H1 (cell line): ENCODE measurements at regions of chr9 and their contacts with region 1.

Region 1: GRCh38 chr9:83334320-83334719 is 203.9 kb downstream of the FRMD3 start:
- DNase-seq: peak in 1 of 2 experiments; percentile 88
- H3K4me3 ChIP-seq: no peak overlapping the region
- H3K27ac ChIP-seq: no peak overlapping the region
- H3K4me1 ChIP-seq: no peaks in the 10 kb centered on the region
- H3K27me3 ChIP-seq: no peaks in the 10 kb centered on the region
- CTCF ChIP-seq: peak; percentile 66 to 94 (median 88)
- EP300 ChIP-seq: no peak
- POLR2A ChIP-seq: no peak
- RAD21 ChIP-seq: peak; percentile 94 to 95

Region 2: GRCh38 chr9:83219152-83219923 is 115.0 kb before region 1 on chr9:
- CTCF ChIA-PET with region 1: interaction called, 64 read pairs
- POLR2A ChIA-PET with region 1: no interaction called
- DNase-seq: peak; percentile 79 to 93
- H3K4me3 ChIP-seq: peak overlapping the region; percentile 47 to 76 (median 66)
- H3K27ac ChIP-seq: no peak overlapping the region
- H3K4me1 ChIP-seq: peaks cover 0 to 3% (median 0%) of the 10 kb centered on the region in 4 experiments; a peak in 2 of 7 replicates
- H3K27me3 ChIP-seq: no peaks in the 10 kb centered on the region
- CTCF ChIP-seq: peak; percentile 65 to 86 (median 78)
- EP300 ChIP-seq: no peak
- POLR2A ChIP-seq: no peak
- RAD21 ChIP-seq: peak; percentile 94 to 97

Region 3: DNA sequence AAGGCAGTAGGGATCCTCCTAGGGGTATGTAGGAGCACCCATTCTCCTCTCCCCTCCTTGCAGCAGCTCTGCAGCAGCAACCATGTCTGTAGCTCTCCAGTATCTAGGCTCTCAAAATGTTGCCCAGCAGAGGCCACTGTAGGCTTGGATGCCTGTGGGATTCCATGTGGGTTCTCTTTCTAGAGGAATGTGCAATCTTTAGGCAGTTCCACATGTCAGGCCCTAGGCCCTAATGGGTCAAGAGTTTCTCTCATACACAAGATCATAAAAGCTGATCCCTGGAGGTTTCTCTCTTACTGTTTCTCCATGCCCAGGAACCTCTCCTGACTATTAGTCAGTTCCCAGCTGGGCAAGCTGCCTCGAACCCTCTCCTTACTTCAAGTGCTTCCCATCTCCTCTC is 11.9 kb before region 1 on chr9:
- CTCF ChIA-PET with region 1: interaction called, 15 read pairs
- POLR2A ChIA-PET with region 1: no interaction called
- DNase-seq: no peak
- H3K4me3 ChIP-seq: no peak overlapping the region
- H3K27ac ChIP-seq: no peak overlapping the region
- H3K4me1 ChIP-seq: no peaks in the 10 kb centered on the region
- H3K27me3 ChIP-seq: no peaks in the 10 kb centered on the region
- CTCF ChIP-seq: no peak
- EP300 ChIP-seq: no peak
- POLR2A ChIP-seq: no peak
- RAD21 ChIP-seq: peak; percentile 7 to 31; a peak in 2 of 4 replicates

Region 4: GRCh38 chr9:83362341-83362995 is 28.1 kb after region 1 on chr9:
- CTCF ChIA-PET with region 1: interaction called, 11 read pairs
- POLR2A ChIA-PET with region 1: no interaction called
- DNase-seq: no peak
- H3K4me3 ChIP-seq: no peak overlapping the region
- H3K27ac ChIP-seq: no peak overlapping the region
- H3K4me1 ChIP-seq: no peaks in the 10 kb centered on the region; a peak in 1 of 7 replicates
- H3K27me3 ChIP-seq: no peaks in the 10 kb centered on the region
- CTCF ChIP-seq: no peak
- EP300 ChIP-seq: no peak
- POLR2A ChIP-seq: no peak
- RAD21 ChIP-seq: no peak

Region 5: GRCh38 chr9:83526901-83527300 is 192.6 kb after region 1 on chr9:
- CTCF ChIA-PET with region 1: interaction called, 26 read pairs
- POLR2A ChIA-PET with region 1: no interaction called
- DNase-seq: no peak
- H3K4me3 ChIP-seq: no peak overlapping the region
- H3K27ac ChIP-seq: no peak overlapping the region
- H3K4me1 ChIP-seq: peaks cover 0 to 4% (median 0%) of the 10 kb centered on the region in 4 experiments; a peak in 1 of 7 replicates
- H3K27me3 ChIP-seq: no peaks in the 10 kb centered on the region
- CTCF ChIP-seq: no peak
- EP300 ChIP-seq: no peak
- POLR2A ChIP-seq: no peak
- RAD21 ChIP-seq: no peak

Region 6: GRCh38 chr9:83563360-83563759 is 229.0 kb after region 1 on chr9:
- CTCF ChIA-PET with region 1: interaction called, 11 read pairs
- POLR2A ChIA-PET with region 1: no interaction called
- DNase-seq: no peak
- H3K4me3 ChIP-seq: no peak overlapping the region
- H3K27ac ChIP-seq: no peak overlapping the region
- H3K4me1 ChIP-seq: no peaks in the 10 kb centered on the region
- H3K27me3 ChIP-seq: no peaks in the 10 kb centered on the region
- CTCF ChIP-seq: no peak
- EP300 ChIP-seq: no peak
- POLR2A ChIP-seq: no peak
- RAD21 ChIP-seq: no peak

Region 7: DNA sequence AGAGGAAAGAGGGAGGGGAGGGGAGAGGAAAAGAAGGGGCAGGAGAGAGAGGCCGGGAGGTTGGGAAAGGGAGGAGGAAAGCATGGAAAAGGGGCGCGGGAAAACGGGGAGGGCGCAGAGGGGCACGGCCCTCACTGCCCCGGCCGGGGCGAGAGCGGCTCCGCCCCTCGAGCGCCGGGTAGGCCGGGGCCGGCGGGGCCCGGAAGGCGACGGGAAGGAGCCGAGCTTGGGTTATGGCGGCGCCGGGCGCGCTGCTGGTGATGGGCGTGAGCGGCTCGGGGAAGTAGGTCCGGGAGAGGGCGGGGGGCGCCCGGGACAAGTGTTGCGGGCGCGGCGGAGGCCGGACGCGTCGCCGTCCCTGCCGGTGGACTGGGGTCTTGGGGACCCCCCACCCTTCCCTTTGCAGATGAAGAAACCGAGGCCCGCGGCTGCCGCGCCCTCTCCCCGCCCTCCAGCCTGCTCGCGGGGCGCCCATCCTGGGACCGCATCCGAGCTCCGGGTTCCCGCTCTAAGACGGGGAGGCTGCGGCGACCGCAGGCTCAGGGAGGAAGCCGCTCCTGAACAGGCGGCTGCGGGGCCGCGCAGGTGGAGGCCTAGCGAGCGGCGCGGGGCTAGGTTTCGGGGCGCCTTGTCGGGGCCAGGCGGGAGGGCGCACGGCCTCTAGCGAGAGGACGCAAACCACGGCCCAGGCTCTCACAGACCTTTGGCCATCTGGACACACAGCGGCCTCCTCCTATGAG is 288.8 kb after region 1 on chr9 and contains the start of gene IDNK:
- CTCF ChIA-PET with region 1: interaction called, 12 read pairs
- POLR2A ChIA-PET with region 1: no interaction called
- DNase-seq: peak in 1 of 2 experiments; percentile 78
- H3K4me3 ChIP-seq: peak within 1 kb of the TSS; percentile 73 to 74 (median 74)
- H3K27ac ChIP-seq: no peak within 1 kb of the TSS
- H3K4me1 ChIP-seq: peaks cover 0 to 2% (median 0%) of the 10 kb centered on the region in 4 experiments; a peak in 3 of 7 replicates
- H3K27me3 ChIP-seq: no peaks in the 10 kb centered on the region; a peak in 1 of 7 replicates
- CTCF ChIP-seq: no peak
- EP300 ChIP-seq: no peak
- POLR2A ChIP-seq: peak in 1 of 2 experiments; percentile 68; a peak in 1 of 3 replicates
- RAD21 ChIP-seq: no peak
- total RNA-seq, gene IDNK: 0.38 and 0.48 TPM in 2 replicates